Natural killer cell (primary cell): ENCODE measurements at regions of chr15 and their contacts with region 1.

Region 1: DNA sequence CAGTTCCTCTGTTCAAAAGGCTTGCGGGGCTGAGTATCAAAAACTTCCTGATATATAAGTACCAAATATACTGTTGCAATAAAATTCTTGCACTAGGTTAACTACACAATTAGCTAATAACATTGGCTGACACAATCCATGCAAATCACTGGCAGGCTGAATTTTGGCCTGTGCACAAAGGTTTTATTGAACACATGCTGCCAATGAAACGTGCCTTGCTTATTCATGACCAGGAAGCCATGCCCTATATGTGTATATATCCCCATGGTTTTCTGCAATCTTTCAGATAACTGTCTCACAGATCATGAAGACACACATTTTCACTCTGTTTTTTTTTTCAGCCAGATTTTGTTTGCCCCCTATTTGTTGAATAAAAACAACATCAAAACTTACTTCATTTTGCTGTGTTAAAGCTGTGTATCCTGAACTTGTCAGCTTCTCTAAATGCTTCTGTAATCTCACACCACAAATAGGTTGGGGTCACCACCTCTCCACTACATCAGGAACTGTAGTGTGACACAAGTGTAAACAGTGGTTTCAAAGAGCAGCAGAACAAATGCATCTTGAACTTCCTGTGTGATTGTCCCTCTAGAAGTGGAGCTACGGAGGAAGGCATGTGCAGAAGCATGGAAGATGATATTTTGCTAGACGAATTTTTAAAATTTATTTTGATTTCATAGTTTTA is 920.7 kb upstream of the NR2F2 start:
- DNase-seq: peak in 1 of 2 donors; percentile 21
- ATAC-seq: peak; percentile 83 to 96 (median 92)
- H3K4me3 ChIP-seq: no peak overlapping the region
- H3K4me3 Mint-ChIP-seq: peak overlapping the region; percentile 68
- H3K27ac ChIP-seq: no peak overlapping the region
- H3K27ac Mint-ChIP-seq: peak overlapping the region; percentile 68 to 78
- H3K4me1 ChIP-seq: peaks cover 14% of the 10 kb centered on the region
- H3K4me1 Mint-ChIP-seq: peaks cover 44 to 50% of the 10 kb centered on the region in 2 donors
- H3K27me3 ChIP-seq: no peaks in the 10 kb centered on the region
- H3K27me3 Mint-ChIP-seq: no peaks in the 10 kb centered on the region
- CTCF ChIP-seq: no peak

Region 2: GRCh38 chr15:95446854-95447253 is 37.1 kb after region 1 on chr15:
- intact Hi-C with region 1: loop called (anchors 2 kb)
- DNase-seq: peak; percentile 26 to 67
- ATAC-seq: peak; percentile 91 to 99 (median 92)
- H3K4me3 ChIP-seq: no peak overlapping the region
- H3K4me3 Mint-ChIP-seq: peak overlapping the region; percentile 64
- H3K27ac ChIP-seq: no peak overlapping the region
- H3K27ac Mint-ChIP-seq: peak overlapping the region; percentile 45 to 57
- H3K4me1 ChIP-seq: peaks cover 22% of the 10 kb centered on the region
- H3K4me1 Mint-ChIP-seq: peaks cover 46 to 47% of the 10 kb centered on the region in 2 donors
- H3K27me3 ChIP-seq: no peaks in the 10 kb centered on the region
- H3K27me3 Mint-ChIP-seq: peaks cover 12 to 17% of the 10 kb centered on the region in 2 donors
- CTCF ChIP-seq: no peak